ENCODE measurements at regions of chr15 and their contacts with region 1.

Region 1: DNA sequence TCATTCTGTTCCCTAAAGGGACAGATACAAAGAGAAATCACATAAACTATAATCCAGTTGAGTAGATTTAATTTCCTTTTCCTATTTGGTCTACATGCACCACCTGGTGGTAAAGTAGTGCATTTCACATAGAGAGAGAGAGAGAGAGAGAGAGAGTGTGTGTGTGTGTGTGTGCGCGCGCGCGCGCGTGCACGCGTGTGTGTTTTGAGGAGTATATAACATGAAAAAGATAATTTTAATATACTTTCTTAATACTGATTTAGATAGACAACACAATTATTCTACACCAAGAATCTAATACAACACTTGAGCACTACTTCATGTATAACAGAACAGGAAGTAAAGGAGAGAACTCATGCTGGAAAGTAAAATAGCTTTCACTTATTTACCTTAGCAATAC is 1.1 kb upstream of the FGF7 start:
- DNase-seq: peak; percentile 24 to 63 (median 32)
- ATAC-seq: peak; percentile 63
- H3K4me3 ChIP-seq: no peak overlapping the region
- H3K27ac ChIP-seq: no peak overlapping the region
- H3K4me1 ChIP-seq: no peaks in the 10 kb centered on the region
- H3K27me3 ChIP-seq: no peaks in the 10 kb centered on the region
- CTCF ChIP-seq: peak; percentile 67 to 88 (median 78)
- EP300 ChIP-seq: no peak
- POLR2A ChIP-seq: no peak
- RAD21 ChIP-seq: peak; percentile 64 to 90

Region 2: DNA sequence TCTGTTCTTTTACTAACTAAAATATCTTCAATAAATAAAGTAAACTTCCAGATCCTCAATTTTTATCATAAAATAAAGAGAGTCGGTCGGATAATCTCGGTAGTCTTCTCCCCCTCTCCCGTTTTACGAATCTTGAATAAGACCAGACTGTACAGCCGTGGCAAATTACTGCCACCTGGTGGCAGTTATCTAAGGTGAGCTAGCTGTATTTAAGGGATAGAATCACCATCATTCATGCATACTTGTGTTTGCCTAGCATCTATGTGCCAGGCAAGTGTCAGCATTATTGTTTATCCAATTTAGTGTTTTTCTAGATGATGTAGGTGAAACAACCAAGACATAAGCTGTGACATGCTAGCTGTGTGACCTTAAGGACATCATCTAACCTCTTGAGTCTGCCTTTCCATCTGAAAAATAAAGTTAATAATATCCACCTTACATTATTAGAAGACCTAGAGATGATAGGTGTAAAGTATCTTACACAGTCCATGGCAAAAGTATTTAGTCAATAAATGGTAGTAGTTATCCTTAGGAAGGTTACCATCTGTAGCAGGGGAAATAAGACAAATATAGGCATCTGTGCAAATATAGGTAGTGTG is 1069.4 kb before region 1 on chr15:
- CTCF ChIA-PET with region 1: no interaction called
- POLR2A ChIA-PET with region 1: no interaction called
- in situ Hi-C with region 1: no loop called
- intact Hi-C with region 1: loop called (anchors 10 kb)
- DNase-seq: peak; percentile 56 to 83 (median 62)
- ATAC-seq: peak; percentile 96
- H3K4me3 ChIP-seq: no peak overlapping the region
- H3K27ac ChIP-seq: no peak overlapping the region
- H3K4me1 ChIP-seq: no peaks in the 10 kb centered on the region; a peak in 2 of 5 replicates
- H3K27me3 ChIP-seq: no peaks in the 10 kb centered on the region
- CTCF ChIP-seq: peak; percentile 72 to 84 (median 79)
- EP300 ChIP-seq: no peak
- POLR2A ChIP-seq: no peak
- RAD21 ChIP-seq: peak; percentile 69 to 85

Region 3: DNA sequence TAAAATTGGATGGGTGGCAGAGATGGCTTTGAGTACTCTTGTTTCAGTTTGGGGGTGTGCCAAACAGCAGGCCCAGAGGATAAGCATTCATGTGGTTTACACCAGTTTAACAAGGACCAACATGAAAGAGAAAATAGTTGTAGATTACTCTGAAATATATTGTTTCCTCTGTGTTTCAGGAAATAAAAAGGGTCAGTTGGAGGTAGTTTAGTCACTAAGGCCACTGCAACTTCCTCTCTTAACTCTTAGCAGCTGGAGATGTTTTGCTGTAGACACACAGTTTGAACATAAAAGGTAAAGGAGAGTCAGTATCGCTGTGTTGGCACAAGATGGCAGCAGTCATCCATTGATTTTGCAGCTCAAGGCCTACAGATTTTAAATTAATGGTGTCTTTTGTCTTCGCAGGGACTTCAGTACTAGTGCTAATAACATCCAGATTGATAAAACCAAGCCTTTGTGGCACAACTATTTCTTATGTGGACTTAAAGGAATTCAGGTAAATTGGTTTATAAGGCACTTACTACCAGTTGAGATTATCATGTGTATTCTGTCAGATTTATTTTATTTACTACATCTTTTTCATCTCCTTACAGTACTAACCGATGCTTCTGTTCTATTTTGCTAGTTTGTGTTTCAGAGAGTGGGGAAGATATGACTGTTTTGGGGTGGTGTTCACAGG is 186.4 kb before region 1 on chr15:
- CTCF ChIA-PET with region 1: interaction called, 3 read pairs
- POLR2A ChIA-PET with region 1: no interaction called
- in situ Hi-C with region 1: no loop called
- intact Hi-C with region 1: loop called (anchors 5 kb)
- DNase-seq: peak in 2 of 4 experiments; percentile 15 to 42
- ATAC-seq: peak; percentile 80
- H3K4me3 ChIP-seq: no peak overlapping the region
- H3K27ac ChIP-seq: no peak overlapping the region
- H3K4me1 ChIP-seq: no peaks in the 10 kb centered on the region
- H3K27me3 ChIP-seq: no peaks in the 10 kb centered on the region
- CTCF ChIP-seq: peak; percentile 21 to 61 (median 51); a peak in 4 of 6 replicates
- EP300 ChIP-seq: no peak
- POLR2A ChIP-seq: no peak
- RAD21 ChIP-seq: peak; percentile 60 to 67

Region 4: GRCh38 chr15:49370782-49371181 is 51.2 kb before region 1 on chr15:
- CTCF ChIA-PET with region 1: no interaction called
- POLR2A ChIA-PET with region 1: no interaction called
- in situ Hi-C with region 1: no loop called
- intact Hi-C with region 1: loop called (anchors 2 kb)
- DNase-seq: peak in 1 of 4 experiments; percentile 26
- ATAC-seq: peak; percentile 56; the same call in 1 of the 3 replicates
- H3K4me3 ChIP-seq: no peak overlapping the region
- H3K27ac ChIP-seq: no peak overlapping the region
- H3K4me1 ChIP-seq: peaks cover 0 to 4% of the 10 kb centered on the region in 2 experiments; a peak in 2 of 5 replicates
- H3K27me3 ChIP-seq: no peaks in the 10 kb centered on the region; a peak in 1 of 5 replicates
- CTCF ChIP-seq: peak; percentile 32 to 49 (median 33); a peak in 3 of 6 replicates
- EP300 ChIP-seq: no peak
- POLR2A ChIP-seq: no peak
- RAD21 ChIP-seq: peak; percentile 45 to 76

Region 5: GRCh38 chr15:49492824-49493223 is 70.8 kb after region 1 on chr15:
- CTCF ChIA-PET with region 1: no interaction called
- POLR2A ChIA-PET with region 1: no interaction called
- in situ Hi-C with region 1: no loop called
- intact Hi-C with region 1: no loop called
- DNase-seq: no peak
- ATAC-seq: no peak
- H3K4me3 ChIP-seq: no peak overlapping the region
- H3K27ac ChIP-seq: no peak overlapping the region
- H3K4me1 ChIP-seq: no peaks in the 10 kb centered on the region
- H3K27me3 ChIP-seq: no peaks in the 10 kb centered on the region
- CTCF ChIP-seq: no peak
- EP300 ChIP-seq: no peak
- POLR2A ChIP-seq: no peak
- RAD21 ChIP-seq: no peak

Region 6: GRCh38 chr15:49558924-49559323 is 136.9 kb after region 1 on chr15:
- CTCF ChIA-PET with region 1: no interaction called
- POLR2A ChIA-PET with region 1: no interaction called
- in situ Hi-C with region 1: no loop called
- intact Hi-C with region 1: no loop called
- DNase-seq: no peak
- ATAC-seq: no peak
- H3K4me3 ChIP-seq: no peak overlapping the region
- H3K27ac ChIP-seq: no peak overlapping the region
- H3K4me1 ChIP-seq: no peaks in the 10 kb centered on the region
- H3K27me3 ChIP-seq: no peaks in the 10 kb centered on the region
- CTCF ChIP-seq: no peak
- EP300 ChIP-seq: no peak
- POLR2A ChIP-seq: no peak
- RAD21 ChIP-seq: no peak

Region 7: DNA sequence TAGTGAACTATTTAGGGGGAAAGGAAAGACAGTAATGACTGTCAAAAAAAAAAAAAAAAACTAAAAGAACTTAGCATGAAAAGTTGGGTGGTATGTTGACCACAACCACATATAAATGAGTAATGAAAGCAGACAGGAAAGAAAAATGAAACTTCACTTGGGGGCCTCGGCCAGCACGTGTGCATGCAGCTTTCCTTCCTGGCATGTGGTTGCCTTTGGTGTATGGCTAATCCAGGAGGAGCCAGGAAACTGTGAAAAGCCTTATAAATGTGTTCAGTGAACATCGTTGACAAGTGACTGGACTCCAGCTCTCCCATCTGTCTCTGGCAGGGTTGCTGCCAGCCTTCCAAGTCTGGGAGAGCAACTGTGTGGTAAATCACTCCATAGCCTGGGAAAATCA is 394.0 kb after region 1 on chr15:
- CTCF ChIA-PET with region 1: no interaction called
- POLR2A ChIA-PET with region 1: no interaction called
- in situ Hi-C with region 1: no loop called
- intact Hi-C with region 1: no loop called
- DNase-seq: no peak
- ATAC-seq: no peak
- H3K4me3 ChIP-seq: no peak overlapping the region
- H3K27ac ChIP-seq: no peak overlapping the region
- H3K4me1 ChIP-seq: no peaks in the 10 kb centered on the region
- H3K27me3 ChIP-seq: no peaks in the 10 kb centered on the region
- CTCF ChIP-seq: no peak
- EP300 ChIP-seq: no peak
- POLR2A ChIP-seq: no peak
- RAD21 ChIP-seq: no peak

Region 8: GRCh38 chr15:50003786-50004334 is 581.9 kb after region 1 on chr15:
- CTCF ChIA-PET with region 1: no interaction called
- POLR2A ChIA-PET with region 1: no interaction called
- in situ Hi-C with region 1: no loop called
- intact Hi-C with region 1: loop called (anchors 1 kb)
- DNase-seq: peak; percentile 78 to 91 (median 84)
- ATAC-seq: peak; percentile 100
- H3K4me3 ChIP-seq: no peak overlapping the region
- H3K27ac ChIP-seq: no peak overlapping the region; the same call in 2 of the 3 replicates
- H3K4me1 ChIP-seq: peaks cover 2 to 4% of the 10 kb centered on the region in 2 experiments; a peak in 1 of 5 replicates
- H3K27me3 ChIP-seq: no peaks in the 10 kb centered on the region
- CTCF ChIP-seq: peak; percentile 87 to 94 (median 89)
- EP300 ChIP-seq: no peak
- POLR2A ChIP-seq: no peak
- RAD21 ChIP-seq: peak; percentile 90 to 93